ENCODE measurements at regions of chr2 and their contacts with region 1.

Region 1: GRCh38 chr2:38602732-38603401 is at the start of gene HNRNPLL:
- DNase-seq: peak; percentile 98
- H3K4me3 Mint-ChIP-seq: peak within 1 kb of the TSS; percentile 92
- H3K27ac Mint-ChIP-seq: peak within 1 kb of the TSS; percentile 93
- H3K4me1 Mint-ChIP-seq: peaks cover 39% of the 10 kb centered on the region
- H3K27me3 Mint-ChIP-seq: no peaks in the 10 kb centered on the region
- total RNA-seq, gene HNRNPLL: 106 to 108 TPM

Region 2: DNA sequence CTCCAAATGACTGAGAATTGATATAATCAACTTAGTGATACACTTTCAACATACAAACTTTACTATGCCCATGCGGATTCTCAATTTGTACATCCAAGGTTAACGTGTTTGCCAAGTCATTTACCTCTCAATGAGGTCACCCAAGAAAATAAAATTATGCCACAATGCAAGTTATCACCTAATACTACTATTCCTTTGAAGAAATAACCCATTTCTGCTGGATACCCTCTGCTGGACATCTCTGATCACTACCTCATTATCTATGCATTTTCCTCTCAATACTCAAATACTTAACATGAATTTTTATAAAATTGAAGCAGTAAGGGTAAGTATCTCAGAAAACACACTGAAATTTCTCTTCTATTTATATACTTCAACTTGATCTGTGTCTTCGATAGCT is 12.8 kb before region 1 on chr2:
- CTCF ChIA-PET with region 1: interaction called, 110 read pairs
- POLR2A ChIA-PET with region 1: interaction called, 31 read pairs
- intact Hi-C with region 1: no loop called
- DNase-seq: no peak
- H3K4me3 Mint-ChIP-seq: no peak overlapping the region
- H3K27ac Mint-ChIP-seq: peak overlapping the region; percentile 77
- H3K4me1 Mint-ChIP-seq: peaks cover 73% of the 10 kb centered on the region
- H3K27me3 Mint-ChIP-seq: no peaks in the 10 kb centered on the region

Region 3: GRCh38 chr2:38653715-38654527 is 51.1 kb after region 1 on chr2:
- CTCF ChIA-PET with region 1: interaction called, 43 read pairs
- POLR2A ChIA-PET with region 1: interaction called, 76 read pairs
- intact Hi-C with region 1: loop called (anchors 1 kb)
- DNase-seq: peak; percentile 89
- H3K4me3 Mint-ChIP-seq: peak overlapping the region; percentile 63
- H3K27ac Mint-ChIP-seq: peak overlapping the region; percentile 91
- H3K4me1 Mint-ChIP-seq: peaks cover 68% of the 10 kb centered on the region
- H3K27me3 Mint-ChIP-seq: no peaks in the 10 kb centered on the region

Region 4: DNA sequence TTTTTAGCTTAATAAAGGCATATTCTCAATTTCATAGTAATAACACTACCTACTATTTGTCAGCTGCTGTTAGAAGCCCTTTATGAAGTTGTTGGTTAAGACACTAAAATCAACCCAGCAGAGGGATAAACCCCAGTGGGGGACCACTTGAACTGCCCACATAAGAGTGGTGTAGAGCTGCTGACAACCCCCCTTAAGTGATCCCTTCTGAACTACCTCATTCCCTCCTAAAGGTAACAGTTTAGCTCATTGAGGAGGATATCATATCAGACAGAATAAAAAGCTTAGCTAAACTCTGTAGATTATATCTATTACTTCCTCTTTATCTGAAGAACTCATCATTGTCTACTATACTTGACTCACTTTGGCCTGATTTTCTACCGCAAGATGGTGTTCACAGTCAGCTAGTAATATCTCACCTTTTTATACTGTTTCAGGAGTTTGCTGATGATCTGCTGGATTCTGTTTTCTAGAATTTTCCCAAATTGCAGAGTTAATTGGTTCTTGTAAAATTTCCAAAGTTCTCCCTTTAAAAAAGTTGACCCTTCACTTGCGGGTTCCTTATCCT is 79.2 kb after region 1 on chr2:
- CTCF ChIA-PET with region 1: interaction called, 46 read pairs
- POLR2A ChIA-PET with region 1: interaction called, 13 read pairs
- intact Hi-C with region 1: loop called (anchors 1 kb)
- DNase-seq: peak; percentile 38
- H3K4me3 Mint-ChIP-seq: peak overlapping the region; percentile 63
- H3K27ac Mint-ChIP-seq: peak overlapping the region; percentile 84
- H3K4me1 Mint-ChIP-seq: peaks cover 78% of the 10 kb centered on the region
- H3K27me3 Mint-ChIP-seq: no peaks in the 10 kb centered on the region

Region 5: GRCh38 chr2:38720613-38721241 is 117.9 kb after region 1 on chr2:
- CTCF ChIA-PET with region 1: interaction called, 94 read pairs
- POLR2A ChIA-PET with region 1: interaction called, 50 read pairs
- intact Hi-C with region 1: loop called (anchors 1 kb)
- DNase-seq: peak; percentile 47
- H3K4me3 Mint-ChIP-seq: peak overlapping the region; percentile 25
- H3K27ac Mint-ChIP-seq: peak overlapping the region; percentile 84
- H3K4me1 Mint-ChIP-seq: peaks cover 72% of the 10 kb centered on the region
- H3K27me3 Mint-ChIP-seq: no peaks in the 10 kb centered on the region

Measured in activated CD4-positive, alpha-beta memory T cell treated with anti-CD3 and anti-CD28 coated beads for 36 hours (primary cell).